ENCODE measurements at regions of chr1 and their contacts with region 1.

Region 1: GRCh38 chr1:77143529-77144121 is 75.6 kb downstream of the PIGK start:
- DNase-seq: no peak
- H3K4me3 ChIP-seq: no peak overlapping the region
- H3K27ac ChIP-seq: no peak overlapping the region
- H3K4me1 ChIP-seq: no peaks in the 10 kb centered on the region
- H3K27me3 ChIP-seq: no peaks in the 10 kb centered on the region
- CTCF ChIP-seq: no peak
- EP300 ChIP-seq: no peak
- POLR2A ChIP-seq: no peak

Region 2: GRCh38 chr1:77514921-77515776 is 371.5 kb after region 1 on chr1:
- intact Hi-C with region 1: no loop called
- DNase-seq: peak in 3 of 5 donors; percentile 27 to 49 (median 44)
- H3K4me3 ChIP-seq: no peak overlapping the region
- H3K27ac ChIP-seq: no peak overlapping the region
- H3K4me1 ChIP-seq: peaks cover 6% of the 10 kb centered on the region
- H3K27me3 ChIP-seq: no peaks in the 10 kb centered on the region
- CTCF ChIP-seq: no peak
- EP300 ChIP-seq: no peak
- POLR2A ChIP-seq: no peak

Region 3: DNA sequence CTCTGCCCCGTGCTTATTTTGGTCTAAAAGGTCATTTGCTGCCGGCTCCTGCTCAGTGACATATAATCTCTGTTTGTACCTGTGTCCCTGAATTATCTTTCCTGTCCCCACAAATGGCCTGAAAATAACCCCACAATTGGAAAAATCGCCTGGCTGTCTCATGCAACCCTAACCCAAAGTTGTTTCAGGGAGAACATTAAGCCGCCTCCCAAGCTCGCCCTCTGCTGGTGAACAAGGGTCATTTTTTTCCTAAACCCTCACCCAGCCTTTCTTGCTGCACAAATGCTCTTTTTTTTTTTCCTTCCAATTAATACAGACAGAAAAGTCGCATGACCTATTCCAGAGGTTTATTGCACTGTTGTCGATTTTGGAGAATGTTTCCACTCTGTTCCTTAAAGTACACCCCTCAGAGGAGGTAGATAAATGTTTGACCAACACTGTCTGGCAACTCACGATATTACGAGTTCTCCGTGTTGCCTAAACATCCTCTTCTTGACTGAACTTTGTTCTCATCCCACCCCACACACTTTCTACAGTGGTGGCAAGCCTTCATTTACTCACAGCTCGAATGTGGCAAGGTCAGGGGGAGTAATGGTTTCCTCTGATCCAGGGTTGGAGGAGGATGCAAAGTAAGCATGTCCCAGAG is 390.2 kb after region 1 on chr1:
- intact Hi-C with region 1: loop called in 3 of 4 experiments (anchors 10 kb)
- DNase-seq: peak; percentile 31 to 59 (median 56)
- H3K4me3 ChIP-seq: no peak overlapping the region
- H3K27ac ChIP-seq: no peak overlapping the region
- H3K4me1 ChIP-seq: no peaks in the 10 kb centered on the region
- H3K27me3 ChIP-seq: no peaks in the 10 kb centered on the region
- CTCF ChIP-seq: peak; percentile 37 to 58 (median 38)
- EP300 ChIP-seq: no peak
- POLR2A ChIP-seq: no peak

Region 4: DNA sequence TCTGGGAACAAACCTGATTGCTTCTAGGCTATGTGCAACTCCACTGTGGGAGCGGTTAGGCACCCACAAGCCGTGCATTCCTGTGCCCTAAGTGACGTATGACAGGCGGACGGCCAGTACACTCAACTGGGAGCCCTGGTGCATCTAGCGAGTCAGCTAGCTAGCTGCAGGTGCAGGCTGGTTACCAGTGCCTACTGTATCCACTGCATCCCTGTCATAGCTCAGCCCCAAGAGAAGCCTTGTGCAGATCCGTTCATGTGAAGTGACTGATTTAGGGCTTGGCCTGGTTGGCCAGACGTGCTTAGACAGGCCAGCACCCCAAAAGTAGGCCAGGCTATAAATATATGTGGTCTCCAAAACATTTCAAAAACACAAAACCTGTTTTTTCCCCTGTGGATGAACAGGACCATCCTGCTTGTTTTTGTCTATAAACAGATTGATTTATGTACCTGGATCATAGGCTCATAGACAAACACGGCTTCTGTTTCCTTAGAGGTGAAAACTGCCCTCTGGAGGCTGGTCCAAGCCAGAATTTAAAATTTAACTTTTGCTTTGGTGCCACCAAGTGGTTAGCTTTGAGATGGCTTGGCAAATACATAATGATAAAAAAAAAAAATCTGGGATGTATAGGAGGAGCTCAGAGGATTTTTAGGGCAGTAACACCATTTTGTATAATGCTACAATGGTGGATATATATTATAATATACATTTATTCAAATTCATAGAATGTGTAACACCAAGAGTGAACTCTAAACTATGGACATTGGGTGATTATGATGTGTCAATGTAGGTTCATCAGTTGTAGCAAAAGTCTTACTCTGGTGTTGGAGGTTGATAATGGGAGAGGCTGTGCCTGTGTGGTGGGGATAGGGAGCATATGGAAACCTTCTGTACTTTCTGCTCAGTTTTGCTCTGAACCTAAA is 970.7 kb after region 1 on chr1:
- intact Hi-C with region 1: loop called in 1 of 4 experiments (anchors 10 kb)
- DNase-seq: peak; percentile 30 to 62 (median 46)
- H3K4me3 ChIP-seq: no peak overlapping the region
- H3K27ac ChIP-seq: no peak overlapping the region
- H3K4me1 ChIP-seq: no peaks in the 10 kb centered on the region
- H3K27me3 ChIP-seq: no peaks in the 10 kb centered on the region
- CTCF ChIP-seq: peak; percentile 72 to 85 (median 75)
- EP300 ChIP-seq: no peak
- POLR2A ChIP-seq: no peak